Activated CD4-positive, alpha-beta T cell treated with anti-CD3 and anti-CD28 coated beads, Interleukin-2, amount 10 ng/mL, durations not matched to agents 7 days and 5 days (primary cell): ENCODE measurements at regions of chr3 and their contacts with region 1.

Region 1: DNA sequence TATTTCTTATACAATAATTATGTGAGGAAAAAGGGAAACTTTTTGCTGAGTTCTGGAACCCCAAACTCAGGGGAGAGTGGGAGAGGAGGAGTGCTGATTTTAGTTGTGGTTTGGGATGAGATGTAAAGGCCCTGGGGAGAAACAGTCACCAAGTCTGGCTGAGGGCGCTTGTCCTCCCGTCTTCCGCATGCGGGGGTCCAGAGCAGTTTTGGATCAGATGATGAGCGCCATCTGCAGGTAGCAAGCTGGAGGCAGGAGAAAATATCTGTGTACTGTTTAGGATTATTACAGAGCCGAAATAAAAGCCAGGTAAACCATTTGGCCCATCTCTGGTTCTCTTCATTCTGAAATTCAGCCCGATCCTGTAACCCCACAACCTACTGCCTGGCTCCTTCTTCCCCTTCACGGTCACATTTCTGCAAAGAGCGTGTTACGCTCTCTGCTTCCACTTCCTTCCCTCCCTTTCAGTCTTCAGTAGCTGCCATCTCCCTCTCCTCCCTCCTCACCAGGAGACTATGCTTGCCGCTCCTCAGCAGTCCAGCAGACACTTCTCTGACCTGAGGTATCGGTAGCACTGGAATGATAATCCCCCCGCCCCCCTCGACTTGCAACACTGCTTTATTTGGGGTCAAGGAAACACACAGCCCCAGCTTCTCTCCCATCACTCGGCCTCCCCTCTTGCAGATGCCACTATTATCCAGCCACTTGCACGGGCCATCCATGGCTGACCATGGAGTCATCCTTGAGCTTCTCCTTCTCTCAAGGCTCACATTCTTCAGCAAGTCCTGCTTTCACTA is 1.4 kb upstream of the PARP14 start:
- DNase-seq: peak; percentile 89
- H3K4me3 Mint-ChIP-seq: peak overlapping the region; percentile 96
- H3K27ac Mint-ChIP-seq: peak overlapping the region; percentile 99
- H3K4me1 Mint-ChIP-seq: peaks cover 55% of the 10 kb centered on the region
- H3K27me3 Mint-ChIP-seq: no peaks in the 10 kb centered on the region

Region 2: DNA sequence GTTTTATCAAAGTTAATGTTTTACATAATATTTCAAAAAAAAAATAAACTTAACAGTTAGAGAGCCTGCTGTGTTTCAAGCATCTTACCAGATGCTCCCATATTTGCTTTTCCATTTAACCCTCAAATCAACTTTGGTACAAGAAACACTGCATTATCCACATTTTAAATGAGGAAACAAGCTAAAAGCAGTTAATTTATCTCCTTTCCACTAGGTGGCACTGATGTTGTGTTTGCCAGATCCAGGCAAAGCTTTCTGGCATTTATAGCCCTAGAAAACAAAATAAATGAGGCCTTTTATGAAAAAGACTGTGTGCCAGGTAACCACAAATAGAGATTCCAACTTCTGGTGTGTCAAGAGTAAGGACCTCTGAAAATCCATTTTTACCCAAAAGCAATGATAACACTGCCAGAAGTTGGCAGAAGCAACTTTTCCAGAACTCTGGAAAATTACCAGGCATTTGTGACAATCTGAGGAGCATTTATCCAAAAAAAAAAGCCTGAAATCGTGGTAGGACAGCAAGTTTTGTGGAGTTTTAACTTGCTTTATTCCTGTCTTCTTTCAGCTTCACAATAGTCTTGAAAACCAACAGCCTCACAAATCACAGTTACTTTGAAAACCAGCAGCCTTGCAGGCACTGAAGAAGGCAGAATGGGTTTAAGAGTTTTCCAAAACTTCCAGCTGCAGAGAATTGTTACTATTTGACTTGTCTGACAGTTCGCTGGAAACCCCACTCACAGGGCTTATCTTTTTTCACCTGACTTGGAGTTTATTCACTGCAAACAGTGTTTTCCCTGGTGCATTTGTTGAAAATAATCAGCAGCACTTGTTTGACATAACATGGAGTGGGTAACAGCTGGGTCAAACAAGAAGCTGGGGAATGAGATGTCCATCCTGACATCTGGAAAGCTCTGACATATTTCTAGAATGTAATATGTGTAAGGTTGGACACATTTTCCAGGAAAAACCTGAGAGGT is 286.1 kb before region 1 on chr3:
- CTCF ChIA-PET with region 1: interaction called, 14 read pairs
- POLR2A ChIA-PET with region 1: no interaction called
- DNase-seq: peak; percentile 46
- H3K4me3 Mint-ChIP-seq: no peak overlapping the region
- H3K27ac Mint-ChIP-seq: no peak overlapping the region
- H3K4me1 Mint-ChIP-seq: peaks cover 33% of the 10 kb centered on the region
- H3K27me3 Mint-ChIP-seq: no peaks in the 10 kb centered on the region

Region 3: GRCh38 chr3:122548076-122548475 is 131.2 kb before region 1 on chr3:
- CTCF ChIA-PET with region 1: interaction called, 12 read pairs
- POLR2A ChIA-PET with region 1: no interaction called
- DNase-seq: no peak
- H3K4me3 Mint-ChIP-seq: no peak overlapping the region
- H3K27ac Mint-ChIP-seq: no peak overlapping the region
- H3K4me1 Mint-ChIP-seq: peaks cover 10% of the 10 kb centered on the region
- H3K27me3 Mint-ChIP-seq: no peaks in the 10 kb centered on the region

Region 4: DNA sequence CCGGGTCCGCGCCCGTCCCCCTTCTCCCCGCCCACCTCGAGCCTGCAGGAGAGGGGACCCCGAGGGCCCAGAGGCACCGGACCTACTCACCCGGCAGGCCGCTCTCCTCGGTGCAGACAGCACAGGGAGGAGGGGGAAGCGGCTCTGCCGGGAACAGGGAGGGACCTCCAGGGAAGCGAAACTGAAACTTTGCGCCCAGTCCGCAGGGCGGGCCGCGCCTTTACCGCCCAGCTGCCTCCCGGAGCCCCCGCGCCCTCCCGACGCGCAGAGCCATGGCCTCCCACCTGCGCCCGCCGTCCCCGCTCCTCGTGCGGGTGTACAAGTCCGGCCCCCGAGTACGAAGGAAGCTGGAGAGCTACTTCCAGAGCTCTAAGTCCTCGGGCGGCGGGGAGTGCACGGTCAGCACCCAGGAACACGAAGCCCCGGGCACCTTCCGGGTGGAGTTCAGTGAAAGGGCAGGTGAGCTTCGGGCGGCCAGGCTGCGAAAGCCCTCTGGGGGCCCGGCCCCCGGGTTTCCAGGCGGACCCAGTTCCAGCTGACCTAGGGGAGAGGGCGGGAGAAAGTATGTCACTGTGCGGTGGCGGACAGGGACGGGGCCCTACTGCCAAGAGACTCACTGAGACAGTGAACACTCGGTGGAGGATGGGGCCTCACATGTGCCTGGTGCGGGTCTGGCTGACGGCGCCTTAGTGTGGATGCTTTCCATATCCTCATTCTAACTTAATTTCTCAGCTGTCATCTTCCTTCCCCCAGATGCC is 114.9 kb before region 1 on chr3 and contains the starts of genes DTX3L and PARP9:
- CTCF ChIA-PET with region 1: interaction called, 107 read pairs
- POLR2A ChIA-PET with region 1: interaction called, 4 read pairs
- DNase-seq: peak; percentile 90
- H3K4me3 Mint-ChIP-seq: peak within 1 kb of the TSS; percentile 93
- H3K27ac Mint-ChIP-seq: peak within 1 kb of the TSS; percentile 98
- H3K4me1 Mint-ChIP-seq: peaks cover 72% of the 10 kb centered on the region
- H3K27me3 Mint-ChIP-seq: no peaks in the 10 kb centered on the region
- total RNA-seq, gene DTX3L: 162 to 189 TPM
- total RNA-seq, gene PARP9: 172 to 186 TPM

Region 5: GRCh38 chr3:122578069-122578740 is 101.1 kb before region 1 on chr3:
- CTCF ChIA-PET with region 1: interaction called, 10 read pairs
- POLR2A ChIA-PET with region 1: no interaction called
- DNase-seq: no peak
- H3K4me3 Mint-ChIP-seq: peak overlapping the region; percentile 100
- H3K27ac Mint-ChIP-seq: peak overlapping the region; percentile 99
- H3K4me1 Mint-ChIP-seq: peaks cover 61% of the 10 kb centered on the region
- H3K27me3 Mint-ChIP-seq: no peaks in the 10 kb centered on the region

Region 6: DNA sequence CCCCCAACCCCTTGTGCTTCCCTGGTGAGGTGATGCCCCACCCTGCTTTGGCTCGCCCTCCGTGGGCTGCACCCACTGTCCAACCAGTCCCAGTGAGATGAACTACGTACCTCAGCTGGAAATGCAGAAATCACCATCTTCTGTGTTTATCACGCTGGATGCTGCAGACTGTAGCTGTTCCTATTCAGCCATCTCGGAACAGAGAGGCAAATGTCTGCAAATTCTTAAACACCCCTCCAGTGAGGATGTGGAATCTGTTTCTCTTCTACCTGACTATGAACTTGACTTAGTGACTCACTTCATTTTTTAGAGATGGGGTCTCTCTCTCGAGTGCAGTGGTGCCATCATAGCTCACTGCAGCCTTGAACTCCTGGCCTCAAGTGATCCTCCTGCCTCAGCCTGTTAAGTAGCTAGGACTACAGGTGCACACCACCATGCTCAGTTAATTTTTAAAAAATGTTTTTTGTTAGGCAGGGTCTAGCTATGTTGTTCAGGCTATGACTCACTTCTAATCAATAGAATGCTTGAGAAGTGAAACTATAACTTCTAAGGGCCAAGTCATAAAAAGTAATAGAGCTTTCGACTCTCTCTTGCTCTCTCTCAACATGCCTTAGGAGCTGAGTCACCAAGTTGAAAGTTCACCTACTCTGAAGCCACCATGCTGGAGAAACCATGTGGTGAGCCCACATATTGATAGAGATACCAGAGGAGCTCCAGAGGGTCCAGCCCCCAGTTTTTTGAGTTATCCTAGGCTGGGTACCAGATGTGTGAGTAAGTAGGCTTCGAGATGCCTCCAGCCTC is 10.2 kb before region 1 on chr3:
- CTCF ChIA-PET with region 1: interaction called, 16 read pairs
- POLR2A ChIA-PET with region 1: no interaction called
- DNase-seq: no peak
- H3K4me3 Mint-ChIP-seq: no peak overlapping the region
- H3K27ac Mint-ChIP-seq: peak overlapping the region; percentile 60
- H3K4me1 Mint-ChIP-seq: peaks cover 13% of the 10 kb centered on the region
- H3K27me3 Mint-ChIP-seq: peaks cover 3% of the 10 kb centered on the region